ENCODE measurements at regions of chr2 and their contacts with region 1.

Region 1: DNA sequence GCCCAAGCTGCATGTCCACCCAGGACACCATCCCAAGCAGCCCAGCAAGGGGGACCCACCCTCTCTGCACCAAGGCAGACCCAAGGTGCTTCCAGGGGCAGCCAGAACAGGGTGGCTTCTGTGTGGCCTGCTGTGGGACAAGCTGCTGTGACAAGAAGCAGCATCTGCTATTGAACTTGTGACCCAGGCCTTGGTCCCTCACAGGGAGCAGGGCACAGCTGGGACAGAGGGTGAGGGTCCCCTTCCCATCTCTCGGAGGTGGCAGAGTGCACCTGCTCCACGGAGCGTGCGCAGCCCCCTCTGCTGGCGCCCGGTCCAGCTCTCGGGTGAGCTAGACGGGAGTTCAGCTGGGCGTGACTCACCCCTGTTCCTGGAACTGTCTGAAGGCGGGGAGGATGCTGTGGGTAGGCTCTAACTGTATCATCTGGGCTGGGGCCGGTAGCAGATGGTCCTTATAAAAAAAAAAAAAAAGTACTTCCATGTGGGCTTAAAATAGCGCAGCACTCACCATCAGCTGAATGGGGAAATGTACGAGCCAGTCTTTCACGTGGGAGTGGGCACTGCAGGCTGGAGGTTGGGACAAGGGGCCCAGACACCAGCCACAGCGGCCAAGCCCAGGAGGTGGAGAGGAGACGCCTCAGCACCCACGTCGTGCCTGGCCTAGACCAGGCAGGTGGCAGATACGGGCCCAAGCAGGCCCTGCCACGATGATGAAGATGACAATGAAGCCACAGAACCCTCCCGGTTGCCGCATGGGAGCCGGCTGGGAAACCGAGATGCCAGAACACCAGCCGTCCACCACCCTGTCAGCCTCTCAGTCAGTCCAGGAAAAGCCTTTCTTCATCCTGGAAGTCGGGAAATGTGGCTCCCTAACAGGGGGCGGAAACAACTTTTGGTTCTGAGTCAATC is 136.8 kb upstream of the ID2 start:
- DNase-seq: peak; percentile 62
- ATAC-seq: peak; percentile 71
- H3K4me3 ChIP-seq: no peak overlapping the region
- H3K27ac ChIP-seq: peak overlapping the region; percentile 95
- H3K4me1 ChIP-seq: peaks cover 56% of the 10 kb centered on the region
- H3K27me3 ChIP-seq: no peaks in the 10 kb centered on the region
- CTCF ChIP-seq: peak; percentile 44 to 66 (median 54); a peak in 5 of 6 replicates
- EP300 ChIP-seq: peak; percentile 8 to 64; a peak in 2 of 4 replicates
- POLR2A ChIP-seq: peak; percentile 29
- RAD21 ChIP-seq: peak; percentile 60

Region 2: GRCh38 chr2:8234757-8235374 is 310.2 kb before region 1 on chr2:
- CTCF ChIA-PET with region 1: no interaction called
- POLR2A ChIA-PET with region 1: no interaction called
- RAD21 ChIA-PET with region 1: interaction called, 3 read pairs
- SMC1A ChIA-PET with region 1: no interaction called
- in situ Hi-C with region 1: no loop called
- intact Hi-C with region 1: loop called (anchors 5 kb)
- DNase-seq: peak; percentile 90
- ATAC-seq: peak; percentile 88
- H3K4me3 ChIP-seq: peak overlapping the region; percentile 26; the same call in 1 of the 2 replicates
- H3K27ac ChIP-seq: peak overlapping the region; percentile 41
- H3K4me1 ChIP-seq: peaks cover 39% of the 10 kb centered on the region
- H3K27me3 ChIP-seq: no peaks in the 10 kb centered on the region
- CTCF ChIP-seq: no peak
- EP300 ChIP-seq: peak; percentile 78 to 84
- POLR2A ChIP-seq: no peak
- RAD21 ChIP-seq: no peak

Region 3: GRCh38 chr2:8488001-8488738 is 56.9 kb before region 1 on chr2:
- CTCF ChIA-PET with region 1: interaction called, 15 read pairs
- POLR2A ChIA-PET with region 1: interaction called, 21 read pairs
- RAD21 ChIA-PET with region 1: interaction called, 39 read pairs
- SMC1A ChIA-PET with region 1: interaction called, 15 read pairs
- in situ Hi-C with region 1: no loop called
- intact Hi-C with region 1: loop called (anchors 1 kb)
- DNase-seq: peak; percentile 95
- ATAC-seq: peak; percentile 63
- H3K4me3 ChIP-seq: peak overlapping the region; percentile 75
- H3K27ac ChIP-seq: peak overlapping the region; percentile 80
- H3K4me1 ChIP-seq: peaks cover 19% of the 10 kb centered on the region
- H3K27me3 ChIP-seq: no peaks in the 10 kb centered on the region
- CTCF ChIP-seq: no peak
- EP300 ChIP-seq: peak; percentile 78 to 80; a peak in 3 of 4 replicates
- POLR2A ChIP-seq: no peak
- RAD21 ChIP-seq: peak; percentile 1; the same call in 1 of the 2 replicates

Region 4: DNA sequence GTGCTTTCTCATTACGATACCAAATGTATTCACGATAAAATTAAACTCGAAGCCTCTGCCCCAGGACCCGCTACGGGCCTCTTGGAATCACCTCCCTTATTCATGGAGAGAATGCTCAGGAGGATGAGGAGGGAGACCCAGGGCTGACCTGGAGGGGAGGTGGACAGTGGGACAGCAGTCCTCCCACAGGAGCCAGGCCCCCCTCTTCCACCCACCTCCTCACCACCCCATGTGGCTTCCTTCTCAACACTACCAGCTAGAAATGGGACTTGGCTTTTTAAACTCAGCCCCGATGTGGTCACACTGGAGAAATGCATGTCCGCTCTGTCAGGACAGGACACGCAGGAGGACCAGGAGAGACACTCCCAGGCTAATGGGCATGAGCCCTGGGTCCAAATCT is 11.1 kb before region 1 on chr2:
- CTCF ChIA-PET with region 1: interaction called, 10 read pairs
- POLR2A ChIA-PET with region 1: interaction called, 42 read pairs
- RAD21 ChIA-PET with region 1: interaction called, 322 read pairs
- SMC1A ChIA-PET with region 1: interaction called, 284 read pairs
- in situ Hi-C with region 1: no loop called
- intact Hi-C with region 1: no loop called
- DNase-seq: no peak
- ATAC-seq: no peak
- H3K4me3 ChIP-seq: no peak overlapping the region
- H3K27ac ChIP-seq: no peak overlapping the region
- H3K4me1 ChIP-seq: peaks cover 12% of the 10 kb centered on the region
- H3K27me3 ChIP-seq: no peaks in the 10 kb centered on the region
- CTCF ChIP-seq: no peak
- EP300 ChIP-seq: no peak
- POLR2A ChIP-seq: no peak
- RAD21 ChIP-seq: no peak

Region 5: GRCh38 chr2:8606226-8606625 is 61.2 kb after region 1 on chr2:
- CTCF ChIA-PET with region 1: no interaction called
- POLR2A ChIA-PET with region 1: interaction called, 3 read pairs
- RAD21 ChIA-PET with region 1: interaction called, 20 read pairs
- SMC1A ChIA-PET with region 1: interaction called, 13 read pairs
- in situ Hi-C with region 1: no loop called
- intact Hi-C with region 1: no loop called
- DNase-seq: peak; percentile 82
- ATAC-seq: peak; percentile 90
- H3K4me3 ChIP-seq: no peak overlapping the region
- H3K27ac ChIP-seq: peak overlapping the region; percentile 23
- H3K4me1 ChIP-seq: peaks cover 30% of the 10 kb centered on the region
- H3K27me3 ChIP-seq: no peaks in the 10 kb centered on the region
- CTCF ChIP-seq: no peak
- EP300 ChIP-seq: peak; percentile 38 to 40; a peak in 2 of 4 replicates
- POLR2A ChIP-seq: no peak
- RAD21 ChIP-seq: no peak